AG04450 (cell line): ENCODE measurements at regions of chr21 and their contacts with region 1.

Region 1: GRCh38 chr21:44792702-44793591 is 8.7 kb downstream of the UBE2G2 start:
- DNase-seq: no peak
- H3K4me3 ChIP-seq: no peak overlapping the region
- H3K27ac ChIP-seq: peak overlapping the region; percentile 11
- H3K27me3 ChIP-seq: no peaks in the 10 kb centered on the region
- CTCF ChIP-seq: peak; percentile 76

Region 2: GRCh38 chr21:44510508-44511210 is 282.3 kb before region 1 on chr21:
- CTCF ChIA-PET with region 1: interaction called, 13 read pairs
- POLR2A ChIA-PET with region 1: no interaction called
- DNase-seq: no peak
- H3K4me3 ChIP-seq: no peak overlapping the region
- H3K27ac ChIP-seq: no peak overlapping the region
- H3K27me3 ChIP-seq: peaks cover 6% of the 10 kb centered on the region
- CTCF ChIP-seq: peak; percentile 57

Region 3: DNA sequence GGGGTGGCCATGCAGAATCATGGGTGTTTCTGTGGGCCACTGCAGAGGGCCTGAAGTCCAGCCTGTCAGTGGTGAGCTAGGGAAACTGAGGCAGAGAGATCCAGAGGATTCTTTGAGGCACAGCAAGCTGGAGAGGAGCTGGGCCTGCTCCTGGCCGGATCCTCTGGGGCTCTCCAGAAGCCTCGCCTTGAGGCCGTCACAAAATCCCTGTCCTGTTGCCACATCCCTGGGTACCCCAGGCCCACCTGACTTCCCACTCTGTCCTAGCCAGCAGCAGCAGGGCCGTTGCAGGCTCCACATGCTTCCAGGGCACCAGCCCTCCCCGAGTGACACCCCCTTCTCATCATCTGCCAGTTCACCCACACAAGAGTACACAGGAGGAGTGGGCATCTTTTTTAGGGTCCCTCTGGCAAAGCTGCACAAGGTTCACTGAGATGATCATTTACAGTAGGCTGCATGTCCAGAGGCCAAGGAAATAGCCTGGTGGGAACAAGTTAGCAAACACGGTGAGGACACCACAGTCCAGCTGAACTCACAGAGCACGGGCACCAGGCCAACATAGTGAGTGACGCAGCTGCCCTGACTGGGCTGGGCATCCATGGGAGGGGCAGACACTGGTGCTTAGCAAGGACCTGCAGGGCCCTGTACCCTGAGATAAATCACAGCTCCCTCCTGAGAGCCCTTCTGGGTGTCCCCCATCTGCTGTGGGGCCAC is 56.5 kb before region 1 on chr21:
- CTCF ChIA-PET with region 1: no interaction called
- POLR2A ChIA-PET with region 1: no interaction called
- DNase-seq: no peak
- H3K4me3 ChIP-seq: no peak overlapping the region
- H3K27ac ChIP-seq: no peak overlapping the region
- H3K27me3 ChIP-seq: peaks cover 12% of the 10 kb centered on the region
- CTCF ChIP-seq: no peak

Region 4: DNA sequence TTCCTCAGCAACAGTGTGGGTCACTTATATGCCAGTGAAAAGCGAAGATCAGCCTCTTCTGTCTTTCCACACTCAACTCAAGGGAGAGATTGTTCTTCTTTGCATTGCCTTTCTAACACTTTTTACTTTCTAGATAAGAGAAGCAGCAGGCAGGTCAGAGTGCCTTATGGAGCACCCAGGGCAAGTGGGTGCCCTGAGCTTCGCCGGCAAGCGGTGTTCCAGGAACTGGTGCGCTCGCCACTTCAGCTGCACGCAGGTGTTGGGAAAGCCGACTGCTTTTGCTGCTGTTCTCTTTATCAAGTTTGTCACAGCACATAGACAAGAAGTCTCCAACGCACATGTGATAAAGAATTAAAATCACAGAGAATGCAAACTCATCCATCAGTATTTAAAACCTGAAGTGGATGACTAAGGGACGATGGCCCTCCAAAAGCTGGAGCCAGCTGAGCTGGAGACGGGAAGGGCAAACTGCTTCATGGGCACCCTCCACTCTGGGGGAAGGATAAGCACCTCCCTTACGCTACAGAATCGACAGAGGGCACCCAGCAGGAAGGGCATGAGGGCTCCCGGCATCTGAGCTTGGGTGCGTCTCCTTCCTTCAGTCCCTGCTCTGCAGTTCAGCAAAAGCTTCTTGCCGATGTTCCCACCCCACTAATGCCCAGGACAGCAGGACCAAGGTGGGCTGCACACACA is 12.0 kb before region 1 on chr21:
- CTCF ChIA-PET with region 1: interaction called, 21 read pairs
- POLR2A ChIA-PET with region 1: no interaction called
- DNase-seq: no peak
- H3K4me3 ChIP-seq: no peak overlapping the region
- H3K27ac ChIP-seq: no peak overlapping the region
- H3K27me3 ChIP-seq: no peaks in the 10 kb centered on the region
- CTCF ChIP-seq: no peak